ENCODE measurements at regions of chr4 and their contacts with region 1.

Region 1: GRCh38 chr4:128322995-128323394 is 35.4 kb upstream of the PGRMC2 start:
- DNase-seq: peak; percentile 68 to 91
- H3K4me3 ChIP-seq: peak overlapping the region; percentile 33; the same call in 1 of the 2 replicates
- H3K27ac ChIP-seq: peak overlapping the region; percentile 89
- H3K4me1 ChIP-seq: peaks cover 40% of the 10 kb centered on the region
- H3K27me3 ChIP-seq: no peaks in the 10 kb centered on the region
- CTCF ChIP-seq: no peak

Region 2: DNA sequence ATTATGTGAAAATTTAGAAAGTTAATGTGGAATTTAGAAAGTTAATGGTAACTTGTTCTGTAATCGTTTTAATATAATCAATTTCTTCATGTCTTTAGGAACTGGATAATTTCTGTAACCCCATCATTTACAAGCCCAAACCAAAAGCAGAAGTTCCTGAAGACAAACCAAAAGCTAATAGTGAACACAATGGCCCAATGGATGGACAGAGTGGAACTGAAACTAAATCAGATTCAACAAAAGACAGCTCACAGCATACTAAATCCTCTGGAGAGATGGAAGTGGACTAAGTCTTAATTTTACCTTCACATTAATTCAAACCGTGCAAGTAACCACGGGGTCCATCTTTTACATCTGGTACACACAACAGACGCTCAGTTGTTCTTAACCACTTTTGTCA is 490.4 kb before region 1 on chr4:
- CTCF ChIA-PET with region 1: no interaction called
- POLR2A ChIA-PET with region 1: no interaction called
- intact Hi-C with region 1: no loop called
- DNase-seq: no peak
- H3K4me3 ChIP-seq: no peak overlapping the region
- H3K27ac ChIP-seq: no peak overlapping the region
- H3K4me1 ChIP-seq: no peaks in the 10 kb centered on the region
- H3K27me3 ChIP-seq: no peaks in the 10 kb centered on the region
- CTCF ChIP-seq: no peak

Region 3: DNA sequence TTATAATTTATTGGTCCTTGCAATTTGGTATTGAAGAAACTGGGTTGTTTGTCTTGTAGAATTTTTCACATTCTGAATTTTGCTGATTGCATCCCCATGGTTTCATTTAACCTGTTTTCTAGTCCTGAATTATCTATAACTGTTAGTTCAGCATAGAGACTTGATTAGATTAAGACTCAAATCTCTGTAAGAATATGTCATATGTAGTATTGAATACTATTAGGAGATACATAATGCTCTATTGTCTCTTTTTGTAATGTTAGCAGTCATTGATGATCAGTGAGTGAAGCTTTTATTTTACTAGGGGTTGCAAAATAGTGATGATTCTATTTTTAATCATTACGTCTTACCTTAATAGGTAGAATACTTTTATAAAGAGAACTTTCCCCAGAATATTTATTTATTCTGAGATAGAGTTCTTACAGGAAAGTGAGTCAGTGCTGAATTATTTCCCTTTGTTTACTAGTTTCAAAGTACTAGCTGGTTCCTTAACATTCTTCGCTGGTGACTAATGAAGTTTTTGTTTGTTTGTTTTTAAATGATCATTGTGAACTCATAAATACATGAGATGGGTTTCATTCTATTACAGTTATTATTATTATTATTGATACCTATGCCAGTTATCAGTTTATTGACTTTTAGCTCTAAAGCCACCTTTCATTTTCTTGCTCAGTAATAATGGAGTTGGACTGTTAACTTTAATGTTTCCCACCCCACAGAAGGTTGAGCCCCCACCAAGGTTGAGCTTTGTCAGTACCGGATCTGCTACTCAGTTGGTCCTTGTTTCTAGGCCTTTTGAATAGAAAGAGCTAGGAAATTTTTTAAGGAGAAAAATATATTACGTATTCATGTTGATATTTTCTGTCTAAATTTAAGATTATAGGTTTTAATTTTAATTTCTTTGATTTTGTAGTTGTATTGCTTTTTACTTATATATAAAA is 159.5 kb before region 1 on chr4:
- CTCF ChIA-PET with region 1: no interaction called
- POLR2A ChIA-PET with region 1: no interaction called
- intact Hi-C with region 1: no loop called
- DNase-seq: peak in 1 of 2 experiments; percentile 89
- H3K4me3 ChIP-seq: no peak overlapping the region; the same call in 1 of the 2 replicates
- H3K27ac ChIP-seq: peak overlapping the region; percentile 73
- H3K4me1 ChIP-seq: peaks cover 28% of the 10 kb centered on the region
- H3K27me3 ChIP-seq: no peaks in the 10 kb centered on the region
- CTCF ChIP-seq: no peak

Region 4: GRCh38 chr4:128311659-128312403 is 11.2 kb before region 1 on chr4:
- CTCF ChIA-PET with region 1: no interaction called
- POLR2A ChIA-PET with region 1: interaction called, 10 read pairs
- intact Hi-C with region 1: no loop called
- DNase-seq: no peak
- H3K4me3 ChIP-seq: no peak overlapping the region
- H3K27ac ChIP-seq: no peak overlapping the region
- H3K4me1 ChIP-seq: peaks cover 18% of the 10 kb centered on the region
- H3K27me3 ChIP-seq: no peaks in the 10 kb centered on the region
- CTCF ChIP-seq: no peak

Measured in PC-9 (cell line).